Calu3 (cell line): ENCODE measurements at regions of chr17 and their contacts with region 1.

Region 1: DNA sequence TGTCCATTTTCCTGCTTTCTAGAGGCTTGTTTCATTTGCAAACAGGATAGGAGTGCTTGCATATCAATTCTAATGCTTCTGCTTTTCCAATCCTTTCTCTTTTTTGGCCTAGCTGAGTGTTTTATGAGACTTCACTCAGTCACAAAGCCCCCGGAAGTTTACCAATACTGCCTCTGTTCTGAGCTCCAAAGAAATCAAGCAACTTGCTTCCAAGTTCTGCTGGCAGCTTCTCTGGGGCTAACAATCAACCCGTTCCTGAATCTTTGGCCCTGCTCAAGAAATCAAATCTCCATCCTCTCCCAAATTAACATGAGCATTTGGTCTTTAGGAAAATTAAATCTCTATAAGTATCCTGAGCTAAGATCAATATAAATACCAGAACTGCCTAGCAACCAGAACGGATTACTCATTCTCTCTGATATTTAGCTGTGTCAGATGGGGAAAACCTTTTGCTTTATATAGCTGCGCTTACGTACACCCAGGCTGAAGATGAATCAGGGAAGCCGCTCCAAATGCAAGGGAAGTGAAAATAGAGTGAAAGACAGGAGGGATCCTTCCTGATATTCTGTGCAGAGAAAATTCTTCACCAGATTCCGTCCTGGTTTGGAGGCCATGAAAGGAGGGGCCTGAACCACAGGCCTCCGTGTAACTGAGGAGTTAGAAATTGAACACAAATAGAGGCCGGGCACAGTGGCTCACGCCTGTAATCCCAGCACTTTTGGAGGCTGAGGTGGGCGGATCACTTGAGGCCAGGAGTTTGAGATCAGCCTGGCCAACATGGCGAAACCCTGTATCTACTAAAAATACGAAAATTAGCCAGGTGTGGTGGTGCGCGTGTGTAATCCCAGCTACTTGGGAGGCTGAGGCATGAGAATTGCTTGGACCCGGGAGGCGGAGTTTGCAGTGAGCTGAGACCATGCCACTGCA is 23.3 kb upstream of the GRB2 start:
- DNase-seq: peak; percentile 47
- H3K4me3 Mint-ChIP-seq: peak overlapping the region; percentile 58
- H3K27ac Mint-ChIP-seq: peak overlapping the region; percentile 93
- H3K4me1 Mint-ChIP-seq: peaks cover 14% of the 10 kb centered on the region
- H3K27me3 Mint-ChIP-seq: no peaks in the 10 kb centered on the region
- CTCF ChIP-seq: no peak

Region 2: GRCh38 chr17:75345514-75346167 is 83.2 kb before region 1 on chr17:
- CTCF ChIA-PET with region 1: no interaction called
- intact Hi-C with region 1: no loop called
- DNase-seq: peak; percentile 22
- H3K4me3 Mint-ChIP-seq: peak overlapping the region; percentile 31
- H3K27ac Mint-ChIP-seq: peak overlapping the region; percentile 63
- H3K4me1 Mint-ChIP-seq: peaks cover 62% of the 10 kb centered on the region
- H3K27me3 Mint-ChIP-seq: no peaks in the 10 kb centered on the region
- CTCF ChIP-seq: no peak

Region 3: DNA sequence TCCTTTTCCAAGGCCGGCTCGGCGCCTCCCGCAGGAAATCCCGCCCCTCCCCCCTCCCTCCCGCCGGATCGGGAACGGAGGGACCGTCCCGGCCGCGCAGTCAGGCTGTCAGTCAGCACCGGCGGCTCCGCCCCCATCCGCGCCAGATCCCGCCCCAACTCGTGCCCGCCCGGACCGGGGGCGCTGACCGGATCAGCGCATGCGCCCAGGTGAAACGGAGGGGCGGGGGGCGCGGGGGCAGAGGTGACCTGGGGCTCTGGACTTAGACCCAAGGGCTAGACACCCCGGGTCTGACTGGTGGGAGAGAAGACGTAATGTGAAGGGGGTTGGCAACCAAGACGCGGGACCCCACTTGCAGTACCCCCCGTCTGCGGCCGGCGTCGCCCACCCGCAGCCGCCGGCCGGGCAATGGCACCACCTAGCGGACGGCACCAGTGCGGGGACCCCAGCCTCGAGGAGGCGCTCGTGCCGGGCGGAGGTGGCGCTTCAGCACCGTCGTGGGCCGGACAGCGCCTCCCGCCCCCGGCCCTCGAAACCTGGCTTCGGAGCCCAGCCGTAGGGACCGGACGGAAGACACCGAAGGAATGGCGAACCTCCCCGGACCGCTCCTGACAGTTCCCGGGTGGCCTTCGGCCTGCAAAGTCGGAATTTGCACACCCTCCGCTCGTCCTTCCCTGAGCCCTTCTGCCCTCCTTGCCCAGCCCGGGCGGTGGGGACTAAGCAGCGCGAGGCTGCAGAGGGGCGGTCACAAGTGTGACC is 86.9 kb after region 1 on chr17 and contains the start of gene CASKIN2:
- CTCF ChIA-PET with region 1: interaction called, 5 read pairs
- intact Hi-C with region 1: loop called (anchors 5 kb)
- DNase-seq: peak; percentile 97
- H3K4me3 Mint-ChIP-seq: peak within 1 kb of the TSS; percentile 77
- H3K27ac Mint-ChIP-seq: no peak within 1 kb of the TSS
- H3K4me1 Mint-ChIP-seq: peaks cover 38% of the 10 kb centered on the region
- H3K27me3 Mint-ChIP-seq: no peaks in the 10 kb centered on the region
- CTCF ChIP-seq: peak; percentile 96
- total RNA-seq, gene CASKIN2: 30.0 and 30.4 TPM in 2 replicates

Region 4: GRCh38 chr17:75589012-75589918 is 160.5 kb after region 1 on chr17:
- CTCF ChIA-PET with region 1: no interaction called
- intact Hi-C with region 1: loop called (anchors 10 kb)
- DNase-seq: peak; percentile 95
- H3K4me3 Mint-ChIP-seq: peak overlapping the region; percentile 64
- H3K27ac Mint-ChIP-seq: no peak overlapping the region
- H3K4me1 Mint-ChIP-seq: no peaks in the 10 kb centered on the region
- H3K27me3 Mint-ChIP-seq: peaks cover 15% of the 10 kb centered on the region
- CTCF ChIP-seq: peak; percentile 61

Region 5: DNA sequence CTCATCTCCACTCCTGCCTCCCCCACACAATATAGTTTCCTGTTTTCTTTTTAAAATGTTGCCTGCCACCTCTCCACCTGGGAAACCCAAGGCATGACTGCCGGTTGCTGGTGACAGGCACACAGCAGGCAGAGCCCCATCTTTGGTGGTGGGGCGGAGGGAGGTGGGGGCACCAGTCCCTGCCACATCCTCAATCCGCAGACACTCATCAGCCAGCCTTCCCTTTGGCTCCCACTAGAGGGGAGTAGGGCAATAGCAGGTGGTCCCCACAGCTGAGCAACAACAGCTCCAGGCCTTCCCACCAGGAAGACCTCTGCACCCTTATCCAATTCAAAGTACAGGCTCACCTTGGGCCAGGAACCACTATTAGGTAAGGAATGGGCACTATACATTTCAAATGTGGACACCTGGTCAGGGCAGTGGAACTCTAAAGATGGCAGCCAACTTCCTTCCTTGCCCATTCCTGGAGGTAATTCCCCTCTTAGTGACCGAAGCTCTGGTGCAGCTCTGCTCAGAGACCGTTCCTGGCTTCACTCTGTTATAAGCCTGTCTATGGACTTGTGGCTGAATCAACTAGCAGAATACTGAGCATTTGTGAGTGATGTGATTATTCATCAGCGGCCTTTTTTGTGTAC is 224.2 kb after region 1 on chr17:
- CTCF ChIA-PET with region 1: no interaction called
- intact Hi-C with region 1: loop called (anchors 5 kb)
- DNase-seq: peak; percentile 63
- H3K4me3 Mint-ChIP-seq: no peak overlapping the region
- H3K27ac Mint-ChIP-seq: no peak overlapping the region
- H3K4me1 Mint-ChIP-seq: no peaks in the 10 kb centered on the region
- H3K27me3 Mint-ChIP-seq: no peaks in the 10 kb centered on the region
- CTCF ChIP-seq: peak; percentile 87